HEK293T (cell line): ENCODE measurements at regions of chr1 and their contacts with region 1.

Region 1: DNA sequence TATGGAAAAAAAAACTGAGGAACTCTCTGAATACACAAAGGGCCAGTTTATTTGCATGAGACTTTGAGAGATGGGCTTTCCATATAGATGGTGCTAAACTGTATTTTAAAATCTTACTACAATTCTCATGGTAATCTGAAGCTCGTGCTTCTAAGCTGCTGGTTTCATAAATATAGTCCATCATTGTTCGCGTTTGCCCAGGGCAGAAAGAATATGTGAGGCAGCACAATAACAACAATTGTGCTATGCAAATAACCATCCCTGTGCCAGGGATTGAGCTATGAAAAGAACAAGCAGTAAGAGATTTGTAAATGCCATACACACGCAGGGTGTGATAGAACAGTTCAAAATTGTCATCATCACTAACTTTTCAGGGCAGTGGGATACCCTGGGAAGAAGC is 4.9 kb upstream of the EPS15 start:
- DNase-seq: no peak

Region 2: DNA sequence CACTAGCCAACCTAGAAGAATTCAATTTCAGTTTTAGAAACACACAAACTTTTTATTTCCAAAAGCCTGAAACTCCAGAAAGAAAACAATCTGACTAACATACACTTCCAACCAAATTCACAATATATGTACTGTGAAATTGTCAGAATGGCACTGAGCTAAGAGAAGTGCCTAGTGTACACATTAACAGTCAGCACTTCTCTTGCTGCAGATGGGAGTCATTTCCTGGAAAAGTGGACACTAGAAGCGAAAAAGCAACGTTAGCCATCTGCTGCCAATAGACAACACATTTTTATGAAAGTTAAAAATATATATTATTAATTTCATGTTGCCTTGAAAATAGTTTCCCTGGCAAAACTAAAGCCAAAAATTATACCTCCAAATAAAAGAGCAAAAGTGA is 70.9 kb before region 1 on chr1:
- CTCF ChIA-PET with region 1: no interaction called
- POLR2A ChIA-PET with region 1: no interaction called
- DNase-seq: no peak

Region 3: DNA sequence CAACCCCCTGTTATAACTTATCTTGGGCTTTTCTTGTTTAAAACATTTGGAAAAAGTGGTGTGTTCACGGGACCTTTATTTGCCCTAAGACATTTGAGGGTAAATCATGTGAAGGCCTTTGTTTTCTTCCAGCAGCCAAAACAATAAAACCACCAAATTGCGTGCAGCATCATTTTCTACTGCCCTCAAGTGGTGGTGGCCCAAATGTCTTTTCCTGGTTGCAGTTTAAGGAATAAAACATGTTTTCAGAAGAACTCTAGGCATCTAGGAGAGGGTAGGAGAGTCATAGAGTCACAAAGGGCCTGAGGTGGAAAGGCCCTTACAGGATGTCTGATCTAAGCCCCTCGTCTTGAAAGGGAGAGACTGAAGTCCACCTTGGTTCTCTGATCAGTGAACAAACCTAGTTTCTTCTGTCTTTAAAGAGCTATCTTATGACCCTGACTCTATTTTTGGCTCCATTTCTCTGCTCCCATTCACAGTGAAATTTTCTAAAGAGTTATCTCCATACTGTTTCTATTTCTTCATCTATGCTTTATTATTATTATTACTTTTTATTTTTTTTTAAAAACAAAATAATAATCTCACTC is 11.2 kb after region 1 on chr1:
- CTCF ChIA-PET with region 1: interaction called, 15 read pairs
- POLR2A ChIA-PET with region 1: no interaction called
- DNase-seq: peak; percentile 58

Region 4: DNA sequence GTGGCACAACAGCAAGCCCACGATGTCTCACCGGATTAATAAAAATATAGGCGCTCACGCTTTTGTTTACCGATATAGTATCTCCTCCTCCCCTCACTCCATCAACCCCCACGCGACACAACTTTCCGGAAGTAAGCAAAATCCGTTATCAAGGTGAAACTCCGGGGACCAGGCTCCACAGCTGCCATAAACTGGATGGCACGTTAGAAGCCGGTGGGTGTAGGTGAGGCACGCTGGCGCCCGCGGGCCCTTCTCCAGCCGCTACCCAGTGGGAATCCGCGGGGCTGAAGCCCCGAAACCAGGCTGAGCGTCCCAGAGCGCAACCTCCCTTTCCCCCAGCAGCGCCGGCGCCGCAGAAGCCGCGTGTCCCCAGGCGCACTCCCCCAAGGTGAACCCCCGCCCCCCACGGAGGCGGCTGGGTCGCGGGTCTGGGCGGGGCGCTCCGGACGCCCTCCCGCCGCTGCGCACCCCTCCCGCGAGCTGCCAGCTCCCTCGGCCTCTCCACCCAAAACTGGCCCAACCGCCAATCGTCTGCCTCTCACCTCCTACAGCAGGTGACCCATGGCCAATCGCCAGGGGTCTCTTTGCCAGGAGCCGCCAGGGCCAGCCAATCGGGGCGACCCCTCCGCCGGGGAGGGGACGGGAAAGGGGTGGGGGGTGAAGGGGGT is 205.4 kb after region 1 on chr1:
- CTCF ChIA-PET with region 1: no interaction called
- POLR2A ChIA-PET with region 1: no interaction called
- DNase-seq: peak; percentile 92